GM10248 (cell line): ENCODE measurements at regions of chr10 and their contacts with region 1.

Region 1: DNA sequence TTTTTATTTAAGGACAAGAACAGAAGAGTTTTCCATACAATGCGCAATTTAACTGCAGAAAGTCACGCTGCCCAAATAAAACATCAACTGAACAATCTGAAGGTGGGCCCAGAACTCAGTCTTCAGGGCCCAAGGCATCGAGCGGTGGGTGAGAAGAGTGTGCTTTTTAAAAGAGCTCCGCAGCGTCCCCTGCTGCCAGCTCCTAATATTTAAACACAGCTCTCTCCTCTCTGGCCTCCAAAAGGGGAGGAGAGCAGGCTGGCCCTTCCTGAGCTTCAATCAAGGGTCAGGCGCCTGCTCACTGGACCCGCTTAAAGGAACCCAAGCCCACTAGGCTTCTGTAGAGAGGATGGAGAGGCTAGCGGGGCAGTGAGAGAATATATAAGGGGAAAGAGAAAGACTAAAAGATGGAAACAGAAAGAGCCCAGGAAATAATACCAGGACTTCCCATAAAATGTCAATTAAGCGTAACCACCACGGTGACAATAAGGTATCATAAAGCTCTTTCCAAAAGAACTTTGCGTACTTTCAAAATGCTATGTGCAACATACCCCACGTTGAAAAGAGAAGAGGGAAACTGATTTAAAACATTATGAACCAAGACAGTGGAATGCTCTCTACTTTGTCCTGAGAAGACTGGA is 2.8 kb downstream of the FAM53B start:
- DNase-seq: peak; percentile 79
- CTCF ChIP-seq: peak; percentile 76

Region 2: GRCh38 chr10:124539935-124540641 is 201.3 kb before region 1 on chr10:
- CTCF ChIA-PET with region 1: interaction called, 69 read pairs
- POLR2A ChIA-PET with region 1: no interaction called
- DNase-seq: peak; percentile 86
- CTCF ChIP-seq: peak; percentile 88

Region 3: GRCh38 chr10:124626759-124627380 is 114.5 kb before region 1 on chr10:
- CTCF ChIA-PET with region 1: interaction called, 16 read pairs
- POLR2A ChIA-PET with region 1: no interaction called
- DNase-seq: no peak
- CTCF ChIP-seq: no peak

Region 4: GRCh38 chr10:124697830-124698544 is 43.4 kb before region 1 on chr10:
- CTCF ChIA-PET with region 1: interaction called, 17 read pairs
- POLR2A ChIA-PET with region 1: no interaction called
- DNase-seq: peak; percentile 64
- CTCF ChIP-seq: no peak

Region 5: DNA sequence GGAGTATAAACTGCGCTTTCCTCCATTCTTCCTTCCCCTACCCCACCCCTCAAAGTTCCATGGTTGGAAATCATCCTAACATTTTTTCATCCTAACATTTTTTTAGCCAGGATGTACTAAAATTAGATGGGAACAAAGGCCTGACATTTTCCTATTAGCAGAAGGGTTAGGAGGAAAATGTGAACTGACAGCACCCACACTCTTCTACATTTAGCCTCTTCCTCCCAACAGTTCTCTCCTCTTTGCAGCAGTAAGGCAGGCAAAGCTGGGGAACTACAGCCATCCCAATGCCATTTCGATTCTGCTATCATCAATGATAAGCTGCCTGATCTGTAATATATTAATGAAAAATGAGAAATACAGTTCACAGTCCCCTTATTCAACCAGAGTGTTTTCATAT is 14.2 kb after region 1 on chr10:
- CTCF ChIA-PET with region 1: interaction called, 19 read pairs
- POLR2A ChIA-PET with region 1: no interaction called
- DNase-seq: no peak
- CTCF ChIP-seq: no peak

Region 6: GRCh38 chr10:124906551-124907001 is 165.2 kb after region 1 on chr10:
- CTCF ChIA-PET with region 1: no interaction called
- POLR2A ChIA-PET with region 1: no interaction called
- DNase-seq: no peak
- CTCF ChIP-seq: no peak